SK-N-SH (cell line): ENCODE measurements at regions of chr14 and their contacts with region 1.

Region 1: GRCh38 chr14:88904864-88905263 is 80.4 kb downstream of the TTC8 start:
- DNase-seq: peak; percentile 26
- H3K4me3 ChIP-seq: no peak overlapping the region
- H3K27ac ChIP-seq: peak overlapping the region; percentile 24 to 100; a peak in 3 of 4 replicates
- H3K4me1 ChIP-seq: peaks cover 0 to 40% of the 10 kb centered on the region in 2 experiments; a peak in 2 of 4 replicates
- H3K27me3 ChIP-seq: no peaks in the 10 kb centered on the region
- CTCF ChIP-seq: no peak
- EP300 ChIP-seq: no peak
- RAD21 ChIP-seq: no peak

Region 2: GRCh38 chr14:88849716-88850115 is 55.1 kb before region 1 on chr14:
- CTCF ChIA-PET with region 1: interaction called, 4 read pairs
- POLR2A ChIA-PET with region 1: interaction called, 14 read pairs
- DNase-seq: no peak
- H3K4me3 ChIP-seq: no peak overlapping the region
- H3K27ac ChIP-seq: peak overlapping the region in 1 of 2 experiments; percentile 60; a peak in 2 of 4 replicates
- H3K4me1 ChIP-seq: peaks cover 0 to 29% of the 10 kb centered on the region in 2 experiments; a peak in 2 of 4 replicates
- H3K27me3 ChIP-seq: no peaks in the 10 kb centered on the region
- CTCF ChIP-seq: no peak
- EP300 ChIP-seq: no peak
- RAD21 ChIP-seq: no peak

Region 3: DNA sequence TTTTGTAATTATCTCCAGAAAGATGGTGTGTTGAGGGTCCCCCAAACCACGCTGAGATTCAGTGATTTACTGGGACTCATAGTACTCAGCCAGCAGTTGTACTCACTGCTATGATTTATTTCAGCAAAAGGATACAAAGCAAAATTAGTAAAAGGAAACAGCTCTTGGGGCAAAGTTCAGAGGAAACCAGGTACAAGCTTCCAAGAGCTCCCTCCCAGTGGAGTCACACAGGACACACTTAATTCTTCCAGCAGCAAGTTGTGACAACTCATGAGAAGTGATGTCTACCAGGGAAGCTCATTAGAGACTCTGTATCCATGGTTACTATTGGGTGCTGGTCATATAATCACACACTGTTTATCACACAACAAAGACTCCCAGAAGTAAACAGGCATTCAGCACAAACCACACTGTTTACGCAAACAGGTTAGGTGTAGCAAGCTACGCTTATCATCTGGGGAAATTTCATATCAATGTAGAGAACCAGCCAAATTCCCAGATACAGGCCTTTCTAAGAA is 41.6 kb before region 1 on chr14:
- CTCF ChIA-PET with region 1: no interaction called
- POLR2A ChIA-PET with region 1: no interaction called
- DNase-seq: no peak
- H3K4me3 ChIP-seq: no peak overlapping the region
- H3K27ac ChIP-seq: no peak overlapping the region; a peak in 1 of 4 replicates
- H3K4me1 ChIP-seq: peaks cover 0 to 10% of the 10 kb centered on the region in 2 experiments; a peak in 2 of 4 replicates
- H3K27me3 ChIP-seq: no peaks in the 10 kb centered on the region
- CTCF ChIP-seq: no peak
- EP300 ChIP-seq: no peak
- RAD21 ChIP-seq: no peak

Region 4: GRCh38 chr14:88975926-88976325 is 71.1 kb after region 1 on chr14:
- CTCF ChIA-PET with region 1: no interaction called
- POLR2A ChIA-PET with region 1: no interaction called
- DNase-seq: no peak
- H3K4me3 ChIP-seq: no peak overlapping the region
- H3K27ac ChIP-seq: peak overlapping the region in 1 of 2 experiments; percentile 58; a peak in 1 of 4 replicates
- H3K4me1 ChIP-seq: peaks cover 0 to 5% of the 10 kb centered on the region in 2 experiments; a peak in 1 of 4 replicates
- H3K27me3 ChIP-seq: no peaks in the 10 kb centered on the region
- CTCF ChIP-seq: no peak
- EP300 ChIP-seq: no peak
- RAD21 ChIP-seq: no peak

Region 5: DNA sequence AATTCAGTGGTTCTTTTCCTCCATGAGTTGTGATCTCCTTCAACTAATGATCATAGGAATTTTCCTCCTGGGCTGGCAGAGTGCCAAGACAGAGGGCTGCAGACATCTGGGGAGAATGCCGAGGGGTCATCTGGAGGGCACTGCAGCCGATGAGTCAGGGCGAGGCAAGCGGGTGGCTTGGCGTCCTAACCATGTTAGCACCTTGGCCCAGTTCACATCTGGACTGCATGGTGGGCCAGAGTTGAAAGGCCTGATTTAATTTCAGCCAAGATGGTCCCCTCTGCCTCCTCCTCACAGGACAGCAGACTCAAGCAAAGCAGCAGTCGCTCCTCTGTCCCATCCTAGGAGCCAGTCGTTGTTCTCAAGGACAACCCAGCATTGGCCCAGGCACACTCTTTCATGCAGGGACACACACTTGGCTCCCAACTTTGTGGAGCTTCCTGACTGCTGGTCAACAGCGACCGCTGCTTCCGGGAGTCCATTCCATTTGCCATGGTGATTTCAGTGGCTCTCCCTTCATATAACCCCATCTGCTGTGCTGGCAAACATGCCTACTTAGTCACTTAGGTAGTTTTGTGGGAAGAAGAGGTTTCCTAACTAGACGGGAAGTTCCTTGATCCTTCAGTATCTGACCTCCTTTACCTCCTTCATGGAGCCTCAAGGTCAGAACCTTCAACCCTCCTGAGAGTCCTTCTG is 81.4 kb after region 1 on chr14:
- CTCF ChIA-PET with region 1: interaction called, 4 read pairs
- POLR2A ChIA-PET with region 1: interaction called, 35 read pairs
- DNase-seq: peak; percentile 69
- H3K4me3 ChIP-seq: no peak overlapping the region
- H3K27ac ChIP-seq: peak overlapping the region; percentile 84 to 100
- H3K4me1 ChIP-seq: peaks cover 0 to 59% of the 10 kb centered on the region in 2 experiments; a peak in 2 of 4 replicates
- H3K27me3 ChIP-seq: no peaks in the 10 kb centered on the region
- CTCF ChIP-seq: no peak
- EP300 ChIP-seq: peak; percentile 33 to 78; a peak in 3 of 4 replicates
- RAD21 ChIP-seq: peak; percentile 2; the same call in 1 of the 2 replicates

Region 6: DNA sequence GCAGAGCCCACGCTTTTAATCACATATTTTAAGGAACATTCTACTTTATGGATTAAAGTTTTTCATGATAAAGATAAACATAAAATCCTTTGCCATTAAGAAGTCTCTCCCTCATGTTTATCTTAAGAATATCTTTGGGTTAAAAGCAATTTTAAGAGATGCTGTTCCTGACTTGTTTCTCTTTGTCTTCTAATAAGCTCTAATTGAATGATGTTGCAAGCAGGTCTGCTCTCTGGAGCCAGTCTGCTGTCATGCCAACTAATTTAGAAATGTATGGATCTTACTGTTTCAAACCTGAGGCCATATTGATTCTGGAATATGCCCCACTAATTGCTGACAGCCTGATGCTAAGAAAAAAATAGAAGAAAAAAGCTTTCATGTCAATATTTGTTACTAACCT is 93.2 kb after region 1 on chr14:
- CTCF ChIA-PET with region 1: interaction called, 3 read pairs
- POLR2A ChIA-PET with region 1: interaction called, 12 read pairs
- DNase-seq: peak; percentile 60
- H3K4me3 ChIP-seq: no peak overlapping the region
- H3K27ac ChIP-seq: peak overlapping the region; percentile 23 to 100; a peak in 3 of 4 replicates
- H3K4me1 ChIP-seq: peaks cover 9 to 53% of the 10 kb centered on the region in 2 experiments; a peak in 3 of 4 replicates
- H3K27me3 ChIP-seq: no peaks in the 10 kb centered on the region
- CTCF ChIP-seq: no peak
- EP300 ChIP-seq: peak; percentile 47 to 99; a peak in 3 of 4 replicates
- RAD21 ChIP-seq: 0 out of 2 replicates have a peak, but pooled peaks have one; percentile 3

Region 7: GRCh38 chr14:89121968-89122620 is 217.2 kb after region 1 on chr14:
- CTCF ChIA-PET with region 1: no interaction called
- POLR2A ChIA-PET with region 1: no interaction called
- DNase-seq: no peak
- H3K4me3 ChIP-seq: no peak overlapping the region
- H3K27ac ChIP-seq: no peak overlapping the region
- H3K4me1 ChIP-seq: no peaks in the 10 kb centered on the region; a peak in 1 of 4 replicates
- H3K27me3 ChIP-seq: no peaks in the 10 kb centered on the region; the same call in 1 of the 2 replicates
- CTCF ChIP-seq: no peak
- EP300 ChIP-seq: no peak
- RAD21 ChIP-seq: no peak